Panc1 (cell line): ENCODE measurements at regions of chr1 and their contacts with region 1.

Region 1: GRCh38 chr1:244435562-244436205 is 16.0 kb downstream of the ADSS2 start:
- DNase-seq: no peak
- ATAC-seq: peak; percentile 83
- H3K4me3 ChIP-seq: no peak overlapping the region
- H3K27ac ChIP-seq: peak overlapping the region; percentile 0; the same call in 1 of the 2 replicates
- H3K4me1 ChIP-seq: peaks cover 12% of the 10 kb centered on the region
- H3K27me3 ChIP-seq: no peaks in the 10 kb centered on the region
- CTCF ChIP-seq: no peak

Region 2: GRCh38 chr1:244187310-244187709 is 248.4 kb before region 1 on chr1:
- CTCF ChIA-PET with region 1: no interaction called
- POLR2A ChIA-PET with region 1: no interaction called
- in situ Hi-C with region 1: no loop called
- intact Hi-C with region 1: no loop called
- DNase-seq: no peak
- ATAC-seq: no peak
- H3K4me3 ChIP-seq: no peak overlapping the region
- H3K27ac ChIP-seq: no peak overlapping the region
- H3K4me1 ChIP-seq: no peaks in the 10 kb centered on the region
- H3K27me3 ChIP-seq: no peaks in the 10 kb centered on the region
- CTCF ChIP-seq: no peak

Region 3: GRCh38 chr1:244280859-244281258 is 154.8 kb before region 1 on chr1:
- CTCF ChIA-PET with region 1: no interaction called
- POLR2A ChIA-PET with region 1: no interaction called
- in situ Hi-C with region 1: no loop called
- intact Hi-C with region 1: no loop called
- DNase-seq: no peak
- ATAC-seq: no peak
- H3K4me3 ChIP-seq: no peak overlapping the region
- H3K27ac ChIP-seq: no peak overlapping the region
- H3K4me1 ChIP-seq: no peaks in the 10 kb centered on the region
- H3K27me3 ChIP-seq: no peaks in the 10 kb centered on the region
- CTCF ChIP-seq: no peak

Region 4: DNA sequence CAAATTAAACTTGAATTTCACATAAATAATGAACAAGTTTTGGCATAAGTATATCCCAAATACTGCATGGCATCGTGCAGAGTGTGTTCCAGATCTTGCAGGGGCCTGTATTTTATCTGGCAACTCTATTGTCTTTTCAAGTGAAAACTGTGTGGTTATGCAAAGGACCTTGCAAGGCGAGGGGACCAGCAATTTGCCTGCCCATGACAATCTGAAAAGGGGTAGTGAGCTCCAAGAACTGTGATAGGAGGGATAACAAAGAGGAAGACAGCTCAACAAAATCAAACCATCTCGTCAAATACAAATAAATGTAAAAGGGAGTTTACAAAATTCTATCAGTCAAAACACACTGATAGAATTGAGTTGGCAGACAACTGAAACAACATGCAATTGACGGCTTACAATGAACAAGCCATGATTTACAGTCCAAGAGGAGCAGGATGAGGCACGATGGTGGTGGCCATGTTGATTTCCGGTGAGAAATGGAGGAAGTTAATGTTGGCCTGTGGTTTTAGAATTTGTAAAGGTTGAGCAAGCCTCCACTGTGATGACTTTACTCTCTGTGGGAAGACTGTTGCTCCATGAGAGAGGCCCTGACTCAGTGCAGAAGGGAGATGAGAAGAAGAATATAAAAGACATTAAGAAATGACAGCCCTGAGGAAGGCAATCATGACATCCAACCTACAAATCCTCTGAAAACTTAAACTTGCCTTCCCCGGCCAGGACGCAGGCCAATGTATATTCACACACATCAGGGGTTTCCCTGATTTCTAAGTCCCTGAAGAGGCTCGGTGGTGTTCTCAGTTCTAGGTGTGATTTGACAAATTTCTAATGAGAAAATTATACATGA is 116.2 kb before region 1 on chr1:
- CTCF ChIA-PET with region 1: no interaction called
- POLR2A ChIA-PET with region 1: no interaction called
- in situ Hi-C with region 1: no loop called
- intact Hi-C with region 1: loop called (anchors 10 kb)
- DNase-seq: no peak
- ATAC-seq: no peak
- H3K4me3 ChIP-seq: no peak overlapping the region
- H3K27ac ChIP-seq: no peak overlapping the region
- H3K4me1 ChIP-seq: peaks cover 9% of the 10 kb centered on the region
- H3K27me3 ChIP-seq: no peaks in the 10 kb centered on the region
- CTCF ChIP-seq: no peak

Region 5: DNA sequence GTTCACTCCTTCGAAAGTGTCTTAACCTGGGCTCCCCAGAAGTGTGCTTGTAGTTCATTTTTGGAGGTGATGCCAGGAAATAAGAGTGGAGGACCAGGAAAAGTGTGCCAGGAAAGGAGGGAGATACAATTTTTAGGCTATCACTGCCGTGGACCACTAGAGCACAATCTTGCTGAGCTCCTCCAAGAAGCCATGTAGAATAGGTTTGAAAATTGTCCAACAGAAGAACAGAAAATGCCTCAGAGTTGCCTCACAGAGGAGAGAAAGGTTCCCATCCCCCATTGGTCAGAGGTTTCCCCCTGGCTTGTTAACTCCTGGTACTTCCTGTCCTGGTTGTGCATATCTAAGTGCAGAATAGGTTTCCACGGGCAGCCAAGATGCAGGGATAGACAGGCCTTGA is 66.9 kb after region 1 on chr1:
- CTCF ChIA-PET with region 1: no interaction called
- POLR2A ChIA-PET with region 1: no interaction called
- in situ Hi-C with region 1: no loop called
- intact Hi-C with region 1: no loop called
- DNase-seq: no peak
- ATAC-seq: no peak
- H3K4me3 ChIP-seq: no peak overlapping the region
- H3K27ac ChIP-seq: no peak overlapping the region
- H3K4me1 ChIP-seq: no peaks in the 10 kb centered on the region
- H3K27me3 ChIP-seq: no peaks in the 10 kb centered on the region
- CTCF ChIP-seq: no peak

Region 6: DNA sequence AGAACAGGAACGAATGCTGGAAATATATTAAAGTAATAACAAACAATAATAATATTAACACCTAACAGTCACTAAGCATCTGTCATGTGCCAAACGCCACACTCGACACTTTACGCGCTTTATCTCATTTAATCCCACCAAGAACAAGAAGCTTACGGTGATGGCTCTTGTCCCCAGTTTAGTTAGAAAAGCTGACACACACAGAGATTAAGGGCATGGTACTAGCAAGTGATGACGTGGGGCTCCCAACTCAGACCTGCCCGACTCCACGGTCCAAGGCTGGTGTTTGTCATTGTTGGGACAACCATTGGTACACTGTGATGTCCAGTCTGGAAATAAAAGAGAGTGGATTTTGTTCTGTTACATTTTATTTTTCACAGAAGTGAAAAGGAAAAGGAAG is 678.0 kb after region 1 on chr1:
- CTCF ChIA-PET with region 1: no interaction called
- POLR2A ChIA-PET with region 1: interaction called, 13 read pairs
- in situ Hi-C with region 1: no loop called
- intact Hi-C with region 1: no loop called
- DNase-seq: no peak
- ATAC-seq: no peak
- H3K4me3 ChIP-seq: no peak overlapping the region
- H3K27ac ChIP-seq: no peak overlapping the region
- H3K4me1 ChIP-seq: no peaks in the 10 kb centered on the region; the same call in 1 of the 2 replicates
- H3K27me3 ChIP-seq: no peaks in the 10 kb centered on the region
- CTCF ChIP-seq: no peak